Cardiac septum (tissue), 1 donor: ENCODE measurements at regions of chr4 and their contacts with region 1.

Region 1: DNA sequence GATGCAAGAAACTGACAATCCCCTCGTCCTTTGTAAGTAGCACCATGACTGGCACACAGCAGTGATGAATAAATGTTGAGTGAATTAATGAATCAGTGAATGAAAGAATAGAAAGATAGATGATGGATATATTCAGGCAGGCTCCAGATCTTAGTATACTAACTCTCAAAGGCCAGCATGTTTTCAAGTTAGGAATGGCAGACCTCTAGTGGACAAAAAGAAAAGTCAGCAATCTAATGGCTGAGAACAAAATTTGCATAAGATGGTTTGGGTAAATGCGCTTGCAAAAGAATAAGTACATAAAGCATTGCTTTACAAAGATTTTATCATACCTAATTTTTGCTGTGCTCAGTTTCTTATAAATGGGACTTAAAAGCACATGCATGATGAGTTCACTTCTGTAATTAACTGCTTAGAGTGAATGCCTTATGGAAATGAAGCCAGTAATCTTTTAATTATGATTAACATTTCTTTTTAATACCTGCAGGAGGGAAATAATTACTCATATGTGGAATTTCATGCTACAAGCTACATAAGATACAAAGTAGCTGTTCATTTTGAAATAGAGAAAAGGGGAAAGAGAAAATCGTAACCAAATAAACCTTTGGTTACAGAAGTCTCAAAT is 126.9 kb upstream of the GPRIN3 start:
- DNase-seq: no peak

Region 2: DNA sequence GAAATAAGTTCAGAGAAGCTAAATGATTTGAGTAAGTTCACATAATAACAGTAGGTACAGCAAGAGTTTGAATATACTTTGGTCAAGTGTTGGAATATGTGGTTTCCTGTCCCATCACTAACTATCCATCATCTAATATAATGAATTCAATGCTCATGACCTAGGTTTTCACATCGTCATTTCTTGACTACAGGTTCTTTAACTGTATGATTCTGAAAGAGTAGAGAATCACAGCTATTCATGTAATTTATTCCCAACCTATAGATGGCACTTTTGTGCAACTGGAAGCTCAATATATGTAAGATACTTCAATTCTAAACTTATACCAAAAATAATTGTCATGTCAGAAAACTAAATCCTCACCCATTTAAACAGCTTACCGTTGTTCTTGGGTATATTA is 270.1 kb before region 1 on chr4:
- intact Hi-C with region 1: loop called (anchors 5 kb)
- DNase-seq: no peak

Region 3: DNA sequence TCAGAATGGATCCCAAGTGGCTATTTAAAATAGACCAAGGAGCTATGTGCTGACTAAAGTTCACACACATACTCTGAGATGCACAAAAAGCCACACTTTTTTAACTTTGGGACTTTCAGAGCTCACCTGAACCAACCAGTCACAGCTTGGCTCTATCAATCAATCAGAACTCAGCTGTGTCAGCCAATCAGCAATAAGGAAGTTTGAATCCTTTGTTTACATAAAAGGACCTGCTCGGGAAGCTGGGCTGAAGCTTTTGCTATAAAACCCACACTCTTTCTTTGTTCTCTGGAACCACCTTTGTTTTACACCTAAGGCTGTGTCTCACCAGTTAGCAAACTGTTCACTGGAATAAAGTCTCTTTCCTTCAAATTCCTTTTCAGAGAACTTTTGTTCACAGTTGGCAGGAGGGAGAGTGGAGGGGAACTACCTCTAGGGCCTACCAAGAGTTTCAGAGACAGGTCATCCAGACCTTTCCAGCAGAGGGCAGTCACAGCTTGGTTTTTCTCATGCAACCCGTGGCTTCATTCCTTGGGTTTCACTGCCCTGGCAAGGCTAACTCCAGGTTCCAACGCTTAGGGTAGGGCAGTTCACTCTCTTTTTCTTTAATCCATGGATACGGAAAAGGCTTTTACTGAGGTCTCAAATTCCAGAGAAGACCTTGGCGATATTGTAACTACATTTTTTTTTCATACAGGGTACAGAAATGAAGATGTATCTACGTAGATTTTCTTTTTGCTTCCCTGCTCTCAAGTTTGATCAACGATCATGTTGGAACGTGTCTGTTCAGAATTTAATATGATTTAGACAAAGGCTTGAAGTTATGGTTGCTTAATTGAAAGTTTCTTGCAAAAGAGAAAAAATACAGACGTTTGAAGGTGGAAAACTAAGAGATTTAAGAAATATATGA is 207.6 kb before region 1 on chr4:
- intact Hi-C with region 1: loop called (anchors 1 kb)
- DNase-seq: peak; percentile 85

Region 4: DNA sequence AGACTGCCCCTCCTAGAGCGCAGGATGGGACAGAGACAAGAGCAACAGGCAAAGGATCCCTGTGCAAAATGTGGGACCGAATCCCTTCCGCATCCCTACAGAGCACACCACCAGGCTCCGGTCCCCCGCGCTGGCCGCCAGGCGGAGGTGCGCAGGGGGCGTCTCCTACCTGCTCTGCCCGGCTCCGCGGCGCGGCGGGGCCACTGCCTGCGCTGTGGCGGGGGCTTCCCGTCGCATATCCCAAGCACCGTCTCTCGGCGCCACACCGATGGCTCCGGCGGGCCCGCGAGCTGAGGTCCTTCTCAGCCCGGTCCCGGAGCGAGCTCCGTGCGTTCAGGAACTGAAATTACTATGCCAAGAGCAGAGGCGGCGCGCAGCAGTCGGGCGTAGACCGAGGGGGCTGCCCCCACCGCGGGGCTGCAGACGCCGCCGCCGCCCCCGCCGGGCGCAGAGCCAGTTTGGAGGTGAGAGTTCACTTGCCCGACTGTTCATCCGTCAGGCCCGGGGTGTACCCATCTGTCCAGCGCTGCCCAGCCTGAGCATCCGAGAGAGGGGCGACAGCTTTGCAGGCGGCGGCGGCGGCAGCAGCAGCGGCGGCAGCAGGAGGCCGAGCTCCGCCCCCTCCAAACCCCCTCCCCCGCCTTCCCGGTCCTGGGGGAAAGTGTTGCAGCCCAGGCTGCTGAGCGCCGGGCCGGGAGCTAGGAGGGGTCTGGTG is 126.9 kb before region 1 on chr4 and contains the start of gene GPRIN3:
- intact Hi-C with region 1: loop called (anchors 10 kb)
- DNase-seq: peak; percentile 82
- total RNA-seq, gene GPRIN3: 7.3 TPM

Region 5: DNA sequence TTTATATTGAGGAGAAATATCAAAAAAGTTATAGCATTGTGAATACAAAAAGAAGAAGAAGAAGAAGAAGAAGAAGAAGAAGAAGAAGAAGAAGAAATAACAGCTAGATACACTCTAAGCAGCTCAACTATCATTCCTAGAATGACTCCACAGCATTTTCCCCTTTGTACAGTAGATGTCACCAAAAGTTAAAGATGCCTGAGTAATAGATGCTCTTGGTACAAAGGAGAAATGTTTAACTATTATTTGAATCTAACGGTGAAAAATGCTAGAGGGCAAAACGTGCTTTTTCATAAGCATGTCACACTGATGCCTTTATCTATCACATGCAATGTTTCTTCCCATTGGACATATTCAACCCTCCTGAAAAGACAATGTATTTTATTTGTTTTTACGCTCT is 51.6 kb after region 1 on chr4:
- intact Hi-C with region 1: no loop called
- DNase-seq: no peak